ENCODE measurements at regions of chr10 and their contacts with region 1.

Region 1: DNA sequence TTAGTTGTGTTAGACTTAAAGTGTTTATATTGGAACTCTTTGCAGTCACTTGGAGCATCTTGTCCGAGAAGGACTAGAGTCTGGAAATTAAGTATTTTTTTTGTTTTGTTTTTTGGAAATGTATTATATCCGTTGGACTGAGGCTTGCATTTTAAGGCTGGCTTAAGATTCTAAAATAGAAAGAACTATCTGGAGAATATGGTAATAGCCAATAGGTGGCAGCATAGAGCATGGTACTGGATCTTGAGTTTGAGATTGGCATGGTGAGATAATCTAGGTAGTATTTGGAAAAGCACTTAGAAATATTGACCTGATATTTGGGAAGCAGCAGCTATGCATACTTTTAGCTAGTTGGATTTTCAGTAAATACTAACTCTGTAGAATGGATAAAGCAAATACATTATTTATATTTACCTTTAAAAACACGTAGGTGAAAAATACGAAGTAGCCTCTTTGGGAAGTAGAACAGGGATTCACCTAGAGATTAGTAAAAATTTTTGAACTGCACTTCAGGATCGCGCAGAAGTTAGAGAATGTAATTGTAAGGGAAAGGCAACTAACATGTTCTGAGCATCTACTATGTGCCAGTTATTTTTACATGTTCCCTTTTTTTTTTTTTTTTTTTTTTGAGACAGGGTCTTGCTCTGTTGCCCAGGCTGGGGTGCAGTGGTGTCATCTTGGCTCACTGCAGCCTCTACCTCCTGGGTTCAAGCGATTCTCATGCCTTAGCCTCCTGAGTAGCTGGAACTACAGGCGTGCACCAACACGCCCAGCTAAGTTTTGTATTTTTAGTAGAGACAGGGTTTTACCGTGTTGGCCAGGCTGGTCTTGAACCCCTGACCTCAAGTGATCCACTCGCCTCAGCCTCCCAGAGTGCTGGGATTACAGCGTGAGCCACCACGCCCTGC is 78.6 kb downstream of the LCOR start:
- DNase-seq: peak; percentile 57
- CTCF ChIP-seq: peak; percentile 72

Region 2: GRCh38 chr10:96873756-96874467 is 36.8 kb before region 1 on chr10:
- CTCF ChIA-PET with region 1: interaction called, 11 read pairs
- POLR2A ChIA-PET with region 1: no interaction called
- DNase-seq: no peak
- CTCF ChIP-seq: no peak

Region 3: DNA sequence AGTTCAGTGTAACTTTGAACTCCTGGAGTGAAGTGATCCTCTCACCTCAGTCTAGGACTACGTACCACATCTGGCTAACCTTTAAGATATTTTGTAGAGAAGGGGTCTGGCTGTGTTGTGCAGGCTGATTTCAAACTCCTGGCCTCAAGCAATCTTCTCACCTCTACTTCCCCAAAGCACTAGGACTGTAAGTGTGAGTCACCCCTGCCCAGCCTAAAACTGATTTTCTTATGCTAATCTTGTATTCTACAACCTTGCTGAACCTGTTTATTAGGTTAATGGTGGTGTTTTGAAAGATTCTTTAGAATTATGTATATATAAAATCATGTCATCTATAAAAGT is 20.6 kb before region 1 on chr10:
- CTCF ChIA-PET with region 1: interaction called, 12 read pairs
- POLR2A ChIA-PET with region 1: no interaction called
- DNase-seq: no peak
- CTCF ChIP-seq: no peak

Region 4: GRCh38 chr10:96896884-96897589 is 13.7 kb before region 1 on chr10:
- CTCF ChIA-PET with region 1: interaction called, 16 read pairs
- POLR2A ChIA-PET with region 1: no interaction called
- DNase-seq: peak; percentile 22
- CTCF ChIP-seq: no peak

Region 5: DNA sequence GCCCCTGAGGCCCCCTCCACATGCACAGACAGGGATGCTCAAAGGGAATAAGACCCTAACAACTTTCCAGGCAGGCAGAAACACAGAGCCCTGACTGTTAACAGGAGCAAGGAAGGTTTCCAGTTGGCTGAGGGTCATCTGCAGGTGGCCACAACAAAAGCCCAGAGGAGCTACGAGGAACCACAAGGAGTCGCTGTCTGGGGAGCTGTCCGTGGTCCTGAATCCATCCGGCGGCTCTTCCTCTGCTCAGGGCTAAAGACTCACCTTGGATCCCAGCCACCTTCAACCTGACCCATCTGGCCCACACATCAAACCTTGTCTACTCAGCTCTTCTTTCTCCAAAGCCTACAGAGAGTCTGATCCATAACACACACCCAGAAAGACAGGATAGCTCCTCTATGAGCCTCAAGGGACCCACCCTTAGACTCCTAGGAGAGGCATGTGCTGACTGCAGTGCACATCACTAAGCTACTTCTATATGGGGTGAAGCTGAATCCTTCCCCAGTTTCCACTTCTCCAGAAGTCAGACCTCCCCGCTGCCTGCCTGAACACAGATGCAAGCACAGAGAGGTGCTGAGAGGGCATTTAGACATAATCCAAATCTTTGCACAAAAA is 171.0 kb after region 1 on chr10:
- CTCF ChIA-PET with region 1: no interaction called
- POLR2A ChIA-PET with region 1: no interaction called
- DNase-seq: peak; percentile 83
- CTCF ChIP-seq: peak; percentile 73